ENCODE measurements at regions of chr1 and their contacts with region 1.

Region 1: GRCh38 chr1:23634842-23635651 is 56.6 kb upstream of the RPL11 start:
- ATAC-seq: peak; percentile 12 to 90 (median 52)
- H3K4me3 ChIP-seq: no peak overlapping the region
- H3K27ac ChIP-seq: no peak overlapping the region
- H3K4me1 ChIP-seq: peaks cover 7 to 17% of the 10 kb centered on the region in 2 donors

Region 2: DNA sequence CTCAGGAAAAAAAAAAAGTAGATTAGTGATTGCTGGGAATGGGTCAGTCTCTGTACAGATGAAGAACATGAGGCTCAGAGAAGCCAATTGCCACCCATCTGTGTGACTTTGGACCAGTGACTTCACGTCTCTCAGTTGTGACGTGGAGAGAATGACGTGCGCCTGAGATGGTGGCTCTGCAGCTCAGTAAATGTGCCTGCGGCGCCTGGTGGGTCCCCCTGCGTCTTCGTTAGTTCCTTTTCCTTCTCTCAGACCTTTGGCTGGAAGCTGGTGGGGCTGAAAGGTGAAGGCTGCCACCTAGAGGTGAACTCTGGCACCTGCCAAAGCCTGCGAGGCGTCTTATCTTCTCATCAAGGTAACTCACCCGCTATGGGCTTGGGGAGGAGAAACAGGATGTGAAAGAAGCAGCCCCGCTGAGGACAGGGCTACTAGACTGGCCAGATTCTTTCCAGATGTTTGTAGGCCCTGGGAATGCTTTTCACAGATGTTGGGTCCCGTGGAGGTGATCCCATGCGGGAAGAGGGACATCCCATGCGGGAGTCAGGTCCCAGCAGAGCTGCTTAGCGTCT is 95.3 kb before region 1 on chr1:
- in situ Hi-C with region 1: loop called in 5 of 9 experiments (anchors 5 to 10 kb)
- ATAC-seq: peak; percentile 84 to 96 (median 94)
- H3K4me3 ChIP-seq: peak overlapping the region in 1 of 5 donors; percentile 6
- H3K27ac ChIP-seq: peak overlapping the region in 1 of 2 donors; percentile 30
- H3K4me1 ChIP-seq: peaks cover under 1 to 5% of the 10 kb centered on the region in 2 donors

Region 3: DNA sequence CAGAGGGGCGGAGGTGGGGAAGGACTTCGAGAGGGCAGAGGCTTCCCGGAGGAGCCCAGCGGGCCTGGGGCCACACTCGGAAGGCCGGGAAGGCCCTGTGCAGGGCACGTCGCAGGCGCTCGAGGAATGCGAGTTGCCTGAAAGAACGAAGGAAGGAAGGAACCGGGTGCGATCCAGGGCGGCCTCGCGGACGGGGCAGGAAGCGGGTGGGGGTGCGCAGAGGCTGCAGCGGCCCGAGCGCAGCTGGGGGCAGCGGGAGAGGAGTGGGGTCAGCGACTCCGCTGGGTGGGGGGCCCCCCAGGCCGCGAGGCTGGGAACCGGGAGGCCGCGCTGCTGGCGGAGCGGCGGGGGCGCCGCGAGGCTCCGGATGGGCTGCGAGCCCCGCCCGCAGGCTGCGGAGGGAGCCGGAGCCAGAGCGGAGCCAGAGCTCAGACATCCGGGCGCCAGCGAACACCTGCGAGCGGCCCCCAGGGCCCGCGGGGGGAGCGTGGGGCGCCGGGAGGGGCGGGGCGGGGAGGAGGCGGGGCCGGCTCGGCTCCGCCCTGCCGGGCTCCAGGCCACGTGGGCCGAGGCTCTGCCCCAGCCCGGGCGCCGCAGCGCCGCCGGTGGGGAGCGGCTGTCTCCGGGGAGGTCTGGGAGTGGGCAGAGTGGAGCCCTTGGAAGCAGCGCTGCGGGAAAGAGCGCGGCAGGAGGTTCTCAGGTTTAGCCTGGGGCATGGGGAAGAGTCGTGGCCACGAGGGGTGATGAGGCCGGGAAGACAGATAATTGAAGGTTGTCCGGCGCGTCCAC is 80.4 kb before region 1 on chr1:
- in situ Hi-C with region 1: loop called in 8 of 9 experiments (anchors 5 to 10 kb)
- ATAC-seq: peak; percentile 50 to 86 (median 84)
- H3K4me3 ChIP-seq: peak overlapping the region; percentile 34 to 47 (median 42)
- H3K27ac ChIP-seq: peak overlapping the region; percentile 60 to 81
- H3K4me1 ChIP-seq: peaks cover 17 to 33% of the 10 kb centered on the region in 2 donors

Measured in motor neuron (in vitro differentiated cells).